ENCODE measurements at regions of chr16 and their contacts with region 1.

Region 1: DNA sequence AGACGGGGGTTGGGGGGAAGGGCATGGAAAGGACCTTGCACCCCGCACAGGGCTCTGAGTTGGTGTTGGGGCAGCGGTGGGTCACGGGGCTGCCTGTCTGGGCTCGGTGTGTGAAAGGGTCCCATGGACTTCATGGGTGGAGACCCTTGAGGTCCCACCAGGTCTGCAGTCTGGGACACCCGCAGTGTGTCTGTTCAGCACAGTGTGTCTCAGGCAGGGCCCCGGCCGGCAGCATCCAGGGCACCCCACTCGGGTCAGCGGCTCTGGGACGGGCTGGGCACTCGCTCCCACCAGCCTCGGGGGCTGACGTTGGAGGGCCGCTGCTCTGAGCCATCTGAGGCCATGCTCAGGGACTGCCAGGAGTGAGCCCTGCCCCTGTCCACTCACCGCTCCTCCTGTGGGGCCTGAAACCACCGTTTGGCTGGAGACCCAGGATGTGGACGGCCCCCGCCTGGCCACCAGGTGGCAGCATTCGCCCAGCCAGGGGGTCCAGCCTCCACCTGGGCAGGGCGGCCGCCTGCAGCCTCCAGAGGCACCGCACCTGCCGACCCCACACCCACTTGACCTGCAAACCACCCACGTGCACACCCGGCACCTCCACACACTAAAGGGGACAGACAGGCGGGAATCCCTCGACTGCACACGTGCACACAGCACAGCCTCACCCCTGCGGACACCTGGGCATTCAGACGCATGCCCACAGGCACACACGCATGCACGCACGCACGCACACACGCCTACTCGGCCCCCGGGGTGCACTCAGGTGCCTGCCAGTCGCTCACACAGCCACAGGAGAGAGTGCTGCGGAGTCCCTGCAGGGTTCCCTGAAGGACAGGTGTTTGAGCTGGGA is 10.1 kb upstream of the ZFPM1 start:
- DNase-seq: peak; percentile 89
- ATAC-seq: peak; percentile 90
- H3K4me3 ChIP-seq: no peak overlapping the region
- H3K27ac ChIP-seq: no peak overlapping the region
- H3K4me1 ChIP-seq: no peaks in the 10 kb centered on the region
- H3K27me3 ChIP-seq: no peaks in the 10 kb centered on the region
- CTCF ChIP-seq: peak; percentile 96

Region 2: DNA sequence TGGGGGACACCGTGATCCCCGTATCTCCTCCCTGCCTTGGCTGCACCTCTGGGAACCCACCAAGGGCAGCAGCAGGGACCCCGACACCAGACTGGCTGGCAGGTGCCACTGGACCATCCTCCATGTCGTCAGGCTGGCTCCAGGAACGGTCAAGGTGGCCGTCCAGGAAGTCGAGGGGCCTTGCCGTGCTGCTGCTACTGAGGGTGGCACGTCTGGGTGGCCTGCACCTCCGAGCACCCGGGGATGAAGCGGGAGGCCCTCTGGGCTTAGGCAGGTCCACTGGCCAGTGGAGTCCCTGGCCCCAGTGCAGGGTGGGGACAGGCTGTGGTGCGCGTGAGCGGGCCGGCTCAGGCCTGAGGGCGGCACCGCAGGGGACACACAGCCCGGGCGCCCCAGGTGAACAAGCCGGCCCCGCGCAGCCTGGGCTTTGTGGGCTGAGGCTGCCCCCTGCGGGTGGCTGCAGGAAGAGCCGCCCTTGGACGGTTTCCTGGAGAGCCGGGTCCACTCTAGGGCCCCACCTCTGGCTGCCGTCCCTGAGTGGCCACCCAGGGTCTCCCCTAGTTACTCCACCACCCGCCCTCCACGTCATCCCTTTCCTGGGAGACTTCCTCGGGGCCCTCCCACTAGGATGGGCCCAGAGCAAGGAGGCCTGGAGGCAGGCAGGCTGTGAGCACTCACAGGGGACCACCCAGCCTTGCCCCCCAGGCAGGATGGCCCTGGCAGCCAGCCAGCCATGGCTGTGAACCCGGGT is 84.4 kb after region 1 on chr16:
- intact Hi-C with region 1: loop called (anchors 2 kb)
- DNase-seq: peak; percentile 83
- ATAC-seq: peak; percentile 80
- H3K4me3 ChIP-seq: no peak overlapping the region
- H3K27ac ChIP-seq: no peak overlapping the region
- H3K4me1 ChIP-seq: peaks cover 8% of the 10 kb centered on the region
- H3K27me3 ChIP-seq: no peaks in the 10 kb centered on the region
- CTCF ChIP-seq: peak; percentile 87

Region 3: GRCh38 chr16:88561485-88562369 is 118.8 kb after region 1 on chr16:
- intact Hi-C with region 1: loop called (anchors 5 kb)
- DNase-seq: no peak
- ATAC-seq: peak; percentile 87
- H3K4me3 ChIP-seq: no peak overlapping the region
- H3K27ac ChIP-seq: no peak overlapping the region
- H3K4me1 ChIP-seq: peaks cover 3% of the 10 kb centered on the region
- H3K27me3 ChIP-seq: no peaks in the 10 kb centered on the region
- CTCF ChIP-seq: peak; percentile 66